ENCODE measurements at regions of chr18 and their contacts with region 1.

Region 1: GRCh38 chr18:10878703-10879102 is 270.7 kb downstream of the PIEZO2 start:
- DNase-seq: no peak
- H3K4me3 ChIP-seq: no peak overlapping the region
- H3K27ac ChIP-seq: no peak overlapping the region
- H3K4me1 ChIP-seq: no peaks in the 10 kb centered on the region
- H3K27me3 ChIP-seq: no peaks in the 10 kb centered on the region
- CTCF ChIP-seq: no peak
- POLR2A ChIP-seq: no peak

Region 2: DNA sequence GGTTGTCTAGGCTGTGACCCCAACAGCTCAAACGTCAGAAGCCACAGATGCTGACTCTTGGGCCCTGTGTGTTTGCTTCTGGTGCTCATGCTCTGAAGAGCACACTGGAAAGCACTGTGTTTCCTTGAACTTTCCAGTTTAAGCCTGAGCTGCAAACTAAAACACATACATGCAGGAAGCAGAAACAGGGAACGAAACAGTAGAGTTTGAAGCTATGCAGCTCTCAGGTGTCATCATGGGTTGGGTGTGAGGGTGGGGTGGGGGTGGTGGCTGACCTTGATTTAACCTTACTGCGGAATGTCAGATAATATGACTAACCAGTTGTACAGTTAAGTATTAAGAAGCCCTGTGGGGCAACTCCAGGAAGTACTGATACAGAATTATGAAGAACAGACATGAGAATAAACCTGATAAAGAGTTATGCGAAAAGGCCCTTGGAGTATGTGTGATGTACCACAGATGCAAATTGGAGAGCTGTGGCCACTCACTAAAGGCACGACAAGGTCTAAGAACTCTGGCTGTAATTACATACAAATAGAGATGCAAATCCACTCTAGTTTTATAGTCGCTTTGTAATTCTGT is 79.9 kb before region 1 on chr18:
- intact Hi-C with region 1: loop called (anchors 2 kb)
- DNase-seq: no peak
- H3K4me3 ChIP-seq: no peak overlapping the region
- H3K27ac ChIP-seq: no peak overlapping the region
- H3K4me1 ChIP-seq: no peaks in the 10 kb centered on the region
- H3K27me3 ChIP-seq: no peaks in the 10 kb centered on the region
- CTCF ChIP-seq: no peak
- POLR2A ChIP-seq: no peak

Region 3: DNA sequence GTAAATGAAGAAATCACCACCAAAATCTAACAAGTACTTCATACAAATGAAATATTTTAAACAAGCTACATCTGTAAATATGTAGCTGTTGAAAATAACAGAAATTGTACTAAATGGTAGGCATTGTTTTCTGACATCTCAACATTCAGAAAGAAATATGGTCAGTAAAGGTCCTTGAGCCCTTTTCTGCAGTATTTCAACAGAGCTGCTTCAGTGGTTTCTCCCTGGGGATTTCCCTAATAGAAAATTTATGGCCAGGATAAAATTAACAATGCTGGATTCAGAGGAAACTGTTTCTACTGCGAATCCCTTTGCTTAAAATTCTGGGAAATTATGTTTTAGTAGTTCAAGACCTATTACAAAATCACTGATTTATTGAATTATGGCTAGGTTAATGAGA is 14.1 kb after region 1 on chr18:
- intact Hi-C with region 1: no loop called
- DNase-seq: no peak
- H3K4me3 ChIP-seq: no peak overlapping the region
- H3K27ac ChIP-seq: no peak overlapping the region
- H3K4me1 ChIP-seq: no peaks in the 10 kb centered on the region
- H3K27me3 ChIP-seq: no peaks in the 10 kb centered on the region
- CTCF ChIP-seq: no peak
- POLR2A ChIP-seq: no peak